Caco-2 (cell line): ENCODE measurements at regions of chr5 and their contacts with region 1.

Region 1: DNA sequence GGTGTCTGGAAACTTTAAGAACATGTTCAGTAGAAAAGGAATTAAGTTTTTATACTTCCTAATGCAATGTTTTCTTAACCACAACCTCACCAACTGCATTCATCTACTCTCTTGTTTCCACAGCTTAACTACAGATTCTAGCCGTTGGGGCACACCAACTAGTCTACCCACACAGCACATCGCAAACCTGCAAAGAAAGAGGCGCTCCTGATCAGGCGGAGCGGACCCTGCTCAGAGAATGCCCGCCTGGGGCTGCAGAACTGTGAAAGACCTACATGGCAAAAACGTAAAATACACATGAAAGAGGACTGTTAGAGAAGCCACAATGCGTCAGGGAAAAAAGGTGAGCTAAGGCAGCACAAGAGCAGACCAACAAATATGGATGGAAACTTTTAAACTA is 75.4 kb upstream of the RAPGEF6 start:
- DNase-seq: no peak
- H3K4me3 ChIP-seq: no peak overlapping the region
- H3K4me3 Mint-ChIP-seq: no peak overlapping the region
- H3K27ac Mint-ChIP-seq: no peak overlapping the region
- H3K4me1 ChIP-seq: no peaks in the 10 kb centered on the region
- H3K4me1 Mint-ChIP-seq: no peaks in the 10 kb centered on the region
- H3K27me3 ChIP-seq: no peaks in the 10 kb centered on the region
- H3K27me3 Mint-ChIP-seq: no peaks in the 10 kb centered on the region
- CTCF ChIP-seq: no peak

Region 2: GRCh38 chr5:131694926-131695325 is 15.5 kb before region 1 on chr5:
- CTCF ChIA-PET with region 1: interaction called, 14 read pairs
- POLR2A ChIA-PET with region 1: no interaction called
- intact Hi-C with region 1: no loop called
- DNase-seq: no peak
- H3K4me3 ChIP-seq: no peak overlapping the region
- H3K4me3 Mint-ChIP-seq: no peak overlapping the region
- H3K27ac Mint-ChIP-seq: no peak overlapping the region
- H3K4me1 ChIP-seq: no peaks in the 10 kb centered on the region
- H3K4me1 Mint-ChIP-seq: no peaks in the 10 kb centered on the region
- H3K27me3 ChIP-seq: no peaks in the 10 kb centered on the region
- H3K27me3 Mint-ChIP-seq: no peaks in the 10 kb centered on the region
- CTCF ChIP-seq: no peak

Region 3: DNA sequence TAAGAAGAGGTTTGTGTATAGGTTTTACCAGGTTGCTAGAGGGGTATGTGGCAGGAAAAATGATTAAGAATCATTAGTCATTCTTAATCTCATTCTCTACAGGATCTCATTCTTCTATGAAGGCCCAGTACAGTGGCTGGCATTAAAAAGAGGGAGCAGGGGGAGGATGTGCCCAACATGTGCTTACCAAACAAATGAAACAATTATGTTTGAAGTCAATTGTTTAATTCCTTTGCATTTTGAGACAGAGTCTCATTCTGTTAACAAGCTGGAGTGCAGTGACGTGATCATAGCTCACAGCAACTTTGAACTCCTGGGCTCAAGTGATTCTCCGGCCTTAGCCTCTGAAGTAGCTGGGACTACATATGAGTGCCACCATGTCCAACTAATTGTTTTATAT is 63.4 kb after region 1 on chr5:
- CTCF ChIA-PET with region 1: no interaction called
- POLR2A ChIA-PET with region 1: no interaction called
- intact Hi-C with region 1: no loop called
- DNase-seq: no peak
- H3K4me3 ChIP-seq: no peak overlapping the region
- H3K4me3 Mint-ChIP-seq: no peak overlapping the region
- H3K27ac Mint-ChIP-seq: no peak overlapping the region
- H3K4me1 ChIP-seq: no peaks in the 10 kb centered on the region; the same call in 1 of the 2 replicates
- H3K4me1 Mint-ChIP-seq: no peaks in the 10 kb centered on the region
- H3K27me3 ChIP-seq: no peaks in the 10 kb centered on the region
- H3K27me3 Mint-ChIP-seq: no peaks in the 10 kb centered on the region
- CTCF ChIP-seq: no peak